ENCODE measurements at regions of chr12 and their contacts with region 1.

Region 1: GRCh38 chr12:109880016-109880931 is at the start of gene GLTP:
- DNase-seq: peak; percentile 89
- ATAC-seq: peak; percentile 97
- H3K4me3 Mint-ChIP-seq: peak within 1 kb of the TSS; percentile 94
- H3K27ac Mint-ChIP-seq: peak within 1 kb of the TSS; percentile 87
- H3K4me1 Mint-ChIP-seq: peaks cover 43% of the 10 kb centered on the region
- H3K27me3 Mint-ChIP-seq: no peaks in the 10 kb centered on the region
- total RNA-seq, gene GLTP: 16.3 to 19.2 TPM

Region 2: GRCh38 chr12:109804820-109805761 is 75.2 kb before region 1 on chr12:
- CTCF ChIA-PET with region 1: interaction called, 12 read pairs
- DNase-seq: peak; percentile 74
- ATAC-seq: peak; percentile 76
- H3K4me3 Mint-ChIP-seq: no peak overlapping the region
- H3K27ac Mint-ChIP-seq: no peak overlapping the region
- H3K4me1 Mint-ChIP-seq: no peaks in the 10 kb centered on the region
- H3K27me3 Mint-ChIP-seq: no peaks in the 10 kb centered on the region